HEK293T (cell line): ENCODE measurements at regions of chr22 and their contacts with region 1.

Region 1: GRCh38 chr22:41448189-41448808 is 1.7 kb upstream of the TOB2 start:
- DNase-seq: peak; percentile 91

Region 2: DNA sequence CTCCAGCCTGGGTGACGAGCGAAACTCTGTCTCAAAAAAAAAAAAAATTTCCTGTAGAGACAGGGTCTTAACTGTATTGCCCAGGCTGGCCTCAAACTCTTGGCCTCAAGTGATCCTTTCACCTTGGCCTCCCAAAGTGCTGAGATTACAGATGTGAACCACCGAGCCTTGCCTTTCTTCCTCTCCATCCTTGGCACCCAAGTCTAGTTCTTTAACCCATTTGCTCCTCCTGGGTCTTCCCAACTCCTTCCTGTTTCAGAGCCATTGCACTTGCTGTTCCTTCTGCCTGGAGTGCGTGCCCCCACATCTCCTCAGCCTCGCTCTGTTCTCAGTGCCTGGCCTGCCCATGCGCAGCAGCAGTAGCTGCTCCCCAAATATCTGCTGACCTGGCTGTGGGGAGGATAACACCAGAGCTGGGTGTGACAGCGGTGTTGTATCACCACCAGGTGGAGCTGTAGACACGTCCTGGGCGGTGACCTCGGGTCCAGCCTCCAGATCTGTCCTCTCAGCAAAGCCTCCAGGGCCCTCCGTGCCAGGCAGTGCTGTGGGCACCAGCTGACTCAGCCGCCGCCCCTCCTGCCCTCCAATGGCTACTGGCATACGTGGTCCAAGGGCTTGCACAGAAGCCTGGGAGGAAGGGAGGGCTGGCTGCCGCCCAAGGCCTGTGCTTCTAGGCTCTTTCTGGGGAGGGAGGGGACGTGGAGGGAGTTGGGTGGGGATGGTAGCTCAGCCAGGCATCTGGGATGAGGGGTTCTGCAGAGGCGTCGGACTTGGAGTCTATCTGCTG is 44.6 kb before region 1 on chr22:
- CTCF ChIA-PET with region 1: interaction called, 4 read pairs
- POLR2A ChIA-PET with region 1: interaction called, 16 read pairs
- DNase-seq: peak; percentile 94

Region 3: DNA sequence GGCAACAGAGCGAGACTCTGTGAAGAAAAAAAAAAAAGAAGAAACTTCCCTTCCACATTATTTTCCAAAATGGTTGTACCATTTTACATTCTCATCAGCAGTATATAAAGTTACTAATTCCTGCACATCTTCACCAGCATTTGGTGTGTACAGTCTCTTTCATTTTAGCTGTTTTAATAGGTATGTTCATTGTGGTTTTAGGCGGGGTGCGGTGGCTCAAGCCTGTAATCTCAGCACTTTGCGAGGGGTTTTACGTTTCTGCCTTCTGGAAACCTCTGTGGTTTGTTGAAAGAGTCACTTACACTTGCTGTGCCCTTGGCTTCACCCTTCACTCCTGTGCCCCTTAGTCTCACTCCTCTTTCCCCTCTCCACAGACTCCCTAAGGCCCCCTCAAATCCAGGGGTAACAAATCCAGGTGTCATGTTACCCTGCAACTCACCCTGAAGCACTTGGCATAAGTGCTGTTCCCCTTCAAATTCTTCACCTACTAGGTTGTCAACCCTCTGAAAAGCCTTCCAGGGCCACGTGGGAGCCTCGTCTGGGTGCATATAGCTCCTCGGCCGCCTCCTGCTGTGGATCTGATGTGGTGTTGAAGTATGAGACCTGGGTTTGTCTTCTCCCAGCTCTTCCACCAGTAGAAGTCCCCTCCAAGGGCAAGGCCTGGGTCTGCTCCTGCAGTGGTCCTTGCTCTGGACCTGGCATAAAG is 22.5 kb before region 1 on chr22:
- CTCF ChIA-PET with region 1: no interaction called
- POLR2A ChIA-PET with region 1: interaction called, 10 read pairs
- DNase-seq: no peak

Region 4: GRCh38 chr22:41468381-41469217 is 20.3 kb after region 1 on chr22 and contains the starts of genes ACO2 and PHF5A:
- CTCF ChIA-PET with region 1: interaction called, 3 read pairs
- POLR2A ChIA-PET with region 1: interaction called, 148 read pairs
- DNase-seq: peak; percentile 94

Region 5: DNA sequence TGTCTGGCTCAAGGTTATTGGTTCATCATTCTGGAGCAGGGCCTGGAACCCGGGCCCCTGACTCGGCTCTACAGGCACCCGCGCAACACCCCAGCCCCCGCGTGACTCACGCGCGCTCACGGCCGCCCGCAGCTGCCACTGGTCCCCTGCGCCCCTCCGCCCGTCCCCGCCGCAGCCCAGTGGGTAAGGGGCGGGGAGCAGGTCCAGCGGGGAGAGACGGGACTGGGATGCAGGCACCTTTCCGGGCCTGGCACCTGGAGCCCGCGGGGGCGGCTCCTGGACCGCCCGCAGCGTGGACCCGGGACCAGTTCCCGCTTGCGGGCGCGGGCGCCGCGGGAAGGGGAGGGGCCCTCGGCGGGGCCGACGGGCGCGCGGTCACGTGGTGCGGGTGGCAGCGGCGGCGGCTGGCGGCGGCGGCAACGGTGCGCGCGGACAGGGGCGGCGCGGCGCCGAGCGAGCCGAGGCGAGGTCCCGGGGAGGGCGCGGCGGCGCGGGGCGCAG is 528.2 kb after region 1 on chr22:
- CTCF ChIA-PET with region 1: no interaction called
- POLR2A ChIA-PET with region 1: no interaction called
- DNase-seq: peak; percentile 71